OCI-LY7 (cell line): ENCODE measurements at regions of chr5 and their contacts with region 1.

Region 1: GRCh38 chr5:134527146-134527960 is 1.9 kb downstream of the JADE2 start:
- DNase-seq: peak; percentile 88
- H3K4me3 ChIP-seq: peak overlapping the region; percentile 77
- H3K27ac ChIP-seq: peak overlapping the region; percentile 88
- H3K4me1 ChIP-seq: peaks cover 30% of the 10 kb centered on the region
- CTCF ChIP-seq: peak; percentile 82

Region 2: DNA sequence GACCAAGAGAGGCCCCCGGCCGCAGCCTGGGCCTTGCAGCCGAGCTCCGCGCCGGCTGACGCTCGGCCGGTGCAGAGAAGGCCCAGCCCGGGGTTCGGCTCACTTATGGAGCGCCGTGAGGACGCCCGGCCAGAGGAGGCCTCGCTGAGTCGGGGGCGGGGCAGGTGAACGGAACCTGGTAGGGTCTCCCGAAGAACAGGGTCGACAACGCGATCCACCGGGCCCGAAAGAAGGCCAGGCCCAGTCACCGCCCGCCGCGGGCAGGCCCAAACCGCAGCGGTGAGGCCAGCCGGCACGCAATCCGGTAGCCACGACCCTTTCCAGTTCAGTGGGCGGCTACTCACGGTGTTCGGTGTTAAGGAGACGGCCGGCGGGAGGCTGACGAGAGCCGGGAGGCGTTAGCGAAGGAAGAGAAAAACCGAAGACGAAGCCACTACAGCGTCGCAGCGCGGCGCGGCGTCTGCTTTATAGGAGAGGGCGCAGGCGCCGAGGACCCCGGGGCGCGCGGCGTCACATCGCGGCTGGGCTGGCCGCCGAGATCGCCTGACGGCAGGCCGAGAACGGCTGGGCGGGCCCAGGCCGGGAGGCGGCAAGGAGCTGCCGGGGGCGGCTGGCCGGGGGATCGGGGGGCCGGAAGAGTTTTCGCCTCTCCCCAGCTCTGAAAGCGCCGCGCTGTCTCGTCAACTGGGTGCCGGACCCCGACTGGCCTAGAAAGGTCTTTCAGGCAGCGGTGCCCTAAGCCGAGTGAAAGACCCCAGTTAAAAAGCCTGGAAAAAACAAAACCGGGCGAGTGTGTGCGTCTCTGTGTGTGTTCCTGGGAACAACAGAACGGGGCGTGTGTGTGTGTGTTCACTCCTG is 350.6 kb before region 1 on chr5 and contains the start of gene SKP1:
- CTCF ChIA-PET with region 1: no interaction called
- POLR2A ChIA-PET with region 1: interaction called, 6 read pairs
- intact Hi-C with region 1: loop called (anchors 2 kb)
- DNase-seq: peak; percentile 89
- H3K4me3 ChIP-seq: peak within 1 kb of the TSS; percentile 89
- H3K27ac ChIP-seq: peak within 1 kb of the TSS; percentile 75
- H3K4me1 ChIP-seq: peaks cover 23% of the 10 kb centered on the region
- CTCF ChIP-seq: no peak
- total RNA-seq, gene SKP1: 129 and 142 TPM in 2 replicates

Region 3: GRCh38 chr5:134411546-134412266 is 115.6 kb before region 1 on chr5 and contains the start of gene CDKN2AIPNL:
- CTCF ChIA-PET with region 1: no interaction called
- POLR2A ChIA-PET with region 1: interaction called, 5 read pairs
- intact Hi-C with region 1: loop called (anchors 2 kb)
- DNase-seq: peak; percentile 91
- H3K4me3 ChIP-seq: peak within 1 kb of the TSS; percentile 100
- H3K27ac ChIP-seq: peak within 1 kb of the TSS; percentile 27
- H3K4me1 ChIP-seq: peaks cover 26% of the 10 kb centered on the region
- CTCF ChIP-seq: peak; percentile 79
- total RNA-seq, gene CDKN2AIPNL: 40.5 and 47.8 TPM in 2 replicates

Region 4: DNA sequence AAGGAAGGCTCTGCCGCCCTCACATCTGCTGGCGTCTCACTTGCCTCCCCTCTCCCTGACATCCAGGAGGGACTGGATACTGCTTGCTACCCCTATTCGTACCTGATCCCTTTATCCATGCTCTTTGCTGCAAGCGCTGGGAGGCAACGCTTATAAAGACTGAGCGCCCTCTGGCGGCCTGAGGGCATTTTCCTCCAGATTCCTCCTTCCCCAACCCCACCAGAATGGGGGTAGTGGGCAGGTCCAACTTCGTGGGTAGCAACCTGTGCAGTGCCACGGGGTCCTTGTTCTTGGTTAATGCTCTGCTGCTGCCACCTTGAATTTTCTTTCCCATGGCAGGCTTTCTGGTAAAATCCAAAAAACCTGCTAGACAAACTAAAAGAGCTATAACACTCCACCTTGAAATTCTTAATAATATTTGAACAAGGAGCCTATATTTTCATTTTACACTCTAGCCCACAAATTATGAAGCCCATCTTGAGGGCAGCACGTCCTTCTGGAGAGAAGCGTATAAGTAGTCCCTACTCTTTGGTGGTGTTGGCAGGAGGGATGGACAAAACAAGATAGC is 50.5 kb after region 1 on chr5:
- CTCF ChIA-PET with region 1: no interaction called
- POLR2A ChIA-PET with region 1: interaction called, 3 read pairs
- intact Hi-C with region 1: loop called (anchors 1 kb)
- DNase-seq: peak; percentile 85
- H3K4me3 ChIP-seq: no peak overlapping the region
- H3K27ac ChIP-seq: no peak overlapping the region
- H3K4me1 ChIP-seq: no peaks in the 10 kb centered on the region
- CTCF ChIP-seq: peak; percentile 96

Region 5: DNA sequence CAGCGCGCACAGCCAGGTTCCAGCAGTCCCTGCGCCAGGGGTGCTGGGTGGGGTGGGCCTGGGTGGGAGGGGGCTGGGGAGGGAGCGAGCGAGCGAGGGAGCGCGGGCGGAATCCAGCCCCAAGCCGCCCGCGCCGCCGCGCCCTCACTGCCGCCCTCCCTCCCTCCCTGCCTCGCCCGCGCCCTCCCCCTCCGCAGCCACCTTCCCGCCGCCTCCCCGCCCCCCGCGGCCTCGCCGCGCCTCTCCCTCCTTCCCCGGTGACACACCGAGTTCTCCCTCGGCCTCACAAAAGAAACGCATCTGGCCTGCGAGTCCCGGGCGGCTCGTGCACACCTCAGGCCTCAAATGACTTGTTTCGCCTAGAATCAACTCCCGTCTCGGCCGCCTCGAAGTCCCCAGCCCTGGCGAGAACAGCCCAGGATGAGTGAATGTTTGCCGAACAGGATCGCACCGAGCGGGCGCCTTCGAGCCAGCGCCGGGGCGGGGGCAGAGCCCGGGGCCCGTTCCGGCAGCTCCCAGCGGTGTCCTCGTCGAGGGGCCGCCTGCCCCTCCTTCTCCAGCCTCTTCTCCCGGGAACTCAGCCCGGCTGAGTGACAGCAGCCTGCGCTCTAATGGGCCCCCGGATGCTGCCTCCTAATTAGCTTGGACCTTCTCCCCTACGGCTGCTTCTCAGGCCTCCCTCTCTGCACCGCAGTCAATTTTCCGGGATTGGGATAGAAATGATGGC is 507.0 kb after region 1 on chr5:
- CTCF ChIA-PET with region 1: no interaction called
- POLR2A ChIA-PET with region 1: no interaction called
- intact Hi-C with region 1: loop called (anchors 10 kb)
- DNase-seq: peak; percentile 90
- H3K4me3 ChIP-seq: peak overlapping the region; percentile 84
- H3K27ac ChIP-seq: peak overlapping the region; percentile 80
- H3K4me1 ChIP-seq: peaks cover 50% of the 10 kb centered on the region
- CTCF ChIP-seq: no peak